ENCODE measurements at regions of chr4 and their contacts with region 1.

Region 1: DNA sequence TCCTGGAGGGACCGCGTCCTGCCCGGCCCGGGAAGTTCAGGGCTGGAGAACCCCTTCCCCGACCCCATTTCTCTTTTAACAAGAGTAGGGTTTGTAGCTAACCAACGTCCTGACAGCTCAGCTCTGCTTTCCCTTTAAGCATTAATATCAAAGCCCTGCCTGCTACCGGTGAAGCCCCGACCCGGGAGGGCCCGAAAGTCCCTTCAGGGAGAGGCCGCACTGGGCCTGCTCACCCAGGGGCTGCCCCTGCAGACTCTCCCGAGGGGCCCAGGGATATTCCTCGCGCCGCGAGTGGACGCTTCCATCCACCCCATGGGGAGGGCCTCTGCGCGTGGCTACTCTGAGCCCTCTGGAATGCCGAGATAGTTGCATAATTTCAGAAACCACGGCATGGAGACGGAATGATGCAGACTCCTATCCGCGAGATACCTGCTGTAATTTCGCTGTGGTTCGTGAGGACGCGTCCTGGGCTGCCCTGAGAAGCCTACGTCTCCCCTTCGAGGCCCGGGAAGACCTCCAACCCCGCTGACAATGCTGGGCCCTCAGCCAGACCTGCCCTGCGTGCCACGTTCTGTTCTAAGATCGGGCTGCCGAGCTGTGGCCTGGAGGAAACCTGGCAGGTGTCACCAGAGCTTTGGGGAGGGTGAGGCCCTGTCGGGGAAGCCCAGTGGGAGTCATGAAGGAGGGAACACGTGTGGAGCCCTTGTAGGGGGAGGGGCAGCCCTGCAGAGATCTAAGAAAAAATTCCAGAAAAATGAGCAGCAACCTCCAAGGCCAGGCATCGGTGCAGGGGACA is 999 bp upstream of the CTBP1 start:
- DNase-seq: peak; percentile 44 to 73 (median 68)
- ATAC-seq: no peak
- H3K4me3 ChIP-seq: peak overlapping the region; percentile 63
- H3K4me1 ChIP-seq: peaks cover 31% of the 10 kb centered on the region
- CTCF ChIP-seq: no peak

Region 2: DNA sequence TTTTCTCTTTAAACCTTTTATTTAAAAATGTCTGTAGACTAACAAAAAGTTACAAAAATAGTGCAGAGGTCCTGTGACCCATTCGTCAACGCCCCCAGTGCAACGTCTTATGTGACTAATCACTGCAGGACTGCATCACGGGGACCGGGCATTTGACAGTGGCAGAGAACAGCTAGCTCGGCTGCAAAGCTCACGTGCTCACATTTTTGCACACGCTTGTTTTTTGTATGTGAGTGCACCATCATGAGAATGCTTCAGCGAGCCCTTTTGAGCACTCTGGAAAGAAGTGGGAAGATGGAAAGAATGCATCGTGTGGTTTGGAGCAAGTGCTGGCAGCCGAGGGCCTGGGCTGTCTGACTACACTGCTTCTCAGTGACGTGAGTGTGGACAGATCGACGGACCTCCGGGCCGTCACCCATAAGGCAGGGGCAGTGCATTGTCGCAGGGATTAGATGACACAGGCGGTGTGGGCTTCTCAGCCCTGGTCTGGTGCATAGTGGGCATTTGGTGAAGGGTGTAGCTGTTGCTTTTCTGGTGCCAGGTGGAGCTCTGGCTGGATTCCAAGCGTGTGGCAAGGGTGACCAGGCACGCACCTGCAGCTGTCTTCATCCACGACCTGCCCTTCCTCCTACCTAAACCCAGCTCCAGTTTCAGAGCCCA is 95.3 kb before region 1 on chr4:
- intact Hi-C with region 1: no loop called
- DNase-seq: peak; percentile 37 to 42 (median 37)
- ATAC-seq: peak; percentile 43
- H3K4me3 ChIP-seq: no peak overlapping the region
- H3K4me1 ChIP-seq: no peaks in the 10 kb centered on the region
- CTCF ChIP-seq: no peak

Region 3: GRCh38 chr4:1167247-1167949 is 82.5 kb before region 1 on chr4:
- intact Hi-C with region 1: loop called in 1 of 2 experiments (anchors 10 kb)
- DNase-seq: peak; percentile 85 to 93 (median 86)
- ATAC-seq: peak; percentile 87
- H3K4me3 ChIP-seq: no peak overlapping the region
- H3K4me1 ChIP-seq: peaks cover 24% of the 10 kb centered on the region
- CTCF ChIP-seq: peak; percentile 85

Region 4: DNA sequence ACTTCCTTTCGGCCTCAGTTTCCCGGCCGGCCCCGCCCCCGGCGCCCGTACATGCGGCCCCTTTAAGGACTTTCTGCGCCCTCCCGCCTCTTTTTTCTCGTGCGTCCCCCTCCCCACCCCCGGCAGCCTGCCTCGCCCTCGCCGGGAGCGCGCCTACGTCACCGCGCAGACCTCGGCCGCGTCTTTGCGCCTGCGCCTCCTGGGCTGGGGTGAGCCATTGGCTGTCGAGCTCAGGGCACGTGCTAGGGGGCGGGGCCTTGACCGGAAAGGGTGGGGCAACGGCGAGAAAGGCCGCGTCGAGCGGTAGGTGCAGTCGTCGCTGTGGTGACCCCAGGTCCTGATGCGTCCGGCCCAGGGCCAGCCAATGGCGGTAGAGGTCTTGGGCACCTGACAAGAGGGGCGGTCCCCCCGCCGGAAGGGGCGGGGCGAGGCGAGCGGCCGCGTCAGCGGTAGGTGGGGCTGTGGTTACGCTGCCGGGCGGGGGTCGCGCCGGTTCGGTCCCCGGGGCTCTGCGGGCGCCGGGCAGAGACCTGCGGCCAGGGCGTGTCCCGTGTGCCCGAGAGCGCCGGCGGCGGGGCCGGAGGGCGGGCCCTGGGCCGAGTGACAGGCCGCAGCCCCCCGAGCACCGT is 97.0 kb after region 1 on chr4 and contains the start of gene UVSSA:
- intact Hi-C with region 1: loop called (anchors 10 kb)
- DNase-seq: peak; percentile 100
- ATAC-seq: peak; percentile 90
- H3K4me3 ChIP-seq: peak within 1 kb of the TSS; percentile 93
- H3K4me1 ChIP-seq: peaks cover 13% of the 10 kb centered on the region
- CTCF ChIP-seq: peak; percentile 14
- total RNA-seq, gene UVSSA: 31.7 to 39.9 (median 36.8) TPM

Region 5: DNA sequence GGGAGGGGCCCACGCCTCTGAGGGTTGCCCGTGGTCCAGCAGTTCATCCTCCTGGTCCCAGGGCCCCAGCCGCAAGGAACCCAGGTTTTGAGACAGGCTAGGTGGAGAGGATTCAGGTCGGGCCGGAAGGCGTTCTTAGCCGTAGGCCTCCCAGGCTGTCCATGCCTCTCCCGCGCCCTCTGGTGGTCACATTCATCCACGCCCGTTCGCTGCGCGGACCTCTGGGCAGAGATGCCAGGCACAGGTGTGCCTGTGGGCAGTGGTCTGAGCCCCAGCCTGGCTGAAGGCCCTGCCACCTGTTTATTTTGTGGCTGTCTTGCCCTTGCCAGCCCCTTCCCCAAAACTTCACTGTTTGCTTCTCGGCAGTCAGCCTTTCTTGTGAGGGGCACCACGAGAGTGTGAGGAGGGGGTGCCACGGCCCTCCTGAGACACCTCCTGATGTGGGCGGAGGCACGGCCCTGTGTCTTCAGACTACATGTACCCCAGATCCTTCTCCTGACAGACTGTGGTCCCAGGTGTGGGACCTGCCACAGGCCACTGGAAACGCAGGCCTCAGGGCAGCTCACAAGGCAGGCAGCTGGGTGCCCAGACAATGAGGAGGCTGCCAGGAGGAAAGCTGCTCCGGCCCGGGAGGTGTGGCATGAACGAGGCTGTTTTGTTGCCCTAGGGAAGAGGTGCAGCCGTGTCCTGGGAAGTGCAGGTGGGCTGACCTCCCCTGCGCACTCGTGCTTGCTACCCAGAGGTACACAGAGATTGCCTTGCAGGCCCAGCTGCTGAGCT is 102.1 kb after region 1 on chr4:
- intact Hi-C with region 1: loop called (anchors 10 kb)
- DNase-seq: peak; percentile 89 to 95 (median 93)
- ATAC-seq: peak; percentile 61
- H3K4me3 ChIP-seq: no peak overlapping the region
- H3K4me1 ChIP-seq: peaks cover 7% of the 10 kb centered on the region
- CTCF ChIP-seq: peak; percentile 92

Region 6: GRCh38 chr4:1492651-1493537 is 243.0 kb after region 1 on chr4:
- intact Hi-C with region 1: no loop called
- DNase-seq: peak in 1 of 3 donors; percentile 17
- ATAC-seq: no peak
- H3K4me3 ChIP-seq: no peak overlapping the region
- H3K4me1 ChIP-seq: no peaks in the 10 kb centered on the region
- CTCF ChIP-seq: no peak

Region 7: GRCh38 chr4:1809754-1810511 is 560.0 kb after region 1 on chr4:
- intact Hi-C with region 1: no loop called
- DNase-seq: peak; percentile 67 to 85 (median 80)
- ATAC-seq: peak; percentile 87
- H3K4me3 ChIP-seq: no peak overlapping the region
- H3K4me1 ChIP-seq: no peaks in the 10 kb centered on the region
- CTCF ChIP-seq: peak; percentile 82

Region 8: DNA sequence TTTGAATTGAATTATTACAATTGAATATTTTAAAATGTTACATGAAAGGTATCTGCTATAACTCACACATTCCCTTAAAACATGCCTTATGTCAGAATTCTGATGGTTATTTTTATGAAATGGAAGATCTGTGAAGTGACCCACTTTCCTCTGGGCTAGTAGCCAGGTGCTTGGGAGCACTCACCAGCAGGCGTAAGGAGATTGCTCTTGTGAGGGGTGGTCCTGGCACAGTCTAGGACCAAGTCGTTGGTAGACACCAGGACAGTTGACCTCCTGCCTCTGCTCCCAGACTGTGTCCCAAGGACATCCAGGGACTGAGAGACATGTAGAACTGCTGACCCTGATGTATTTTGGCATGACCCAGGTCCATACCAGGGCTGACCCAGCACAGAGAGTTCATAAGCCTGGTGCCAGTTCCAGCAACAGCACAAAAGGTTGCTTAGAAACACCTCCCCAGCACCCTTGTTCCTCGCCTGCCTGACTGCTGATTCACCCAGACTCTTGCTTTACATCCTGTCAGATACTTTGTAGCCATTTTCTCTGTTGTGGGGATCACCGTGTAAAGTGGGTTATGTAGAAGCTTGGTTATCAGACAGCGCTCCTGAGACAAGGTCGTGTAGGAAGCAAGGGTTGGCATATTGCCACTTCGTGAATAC is 710.4 kb after region 1 on chr4:
- intact Hi-C with region 1: no loop called
- DNase-seq: no peak
- ATAC-seq: no peak
- H3K4me3 ChIP-seq: no peak overlapping the region
- H3K4me1 ChIP-seq: no peaks in the 10 kb centered on the region
- CTCF ChIP-seq: no peak